Kidney (tissue), 22 donors: ENCODE measurements at regions of chr15 and their contacts with region 1.

Region 1: DNA sequence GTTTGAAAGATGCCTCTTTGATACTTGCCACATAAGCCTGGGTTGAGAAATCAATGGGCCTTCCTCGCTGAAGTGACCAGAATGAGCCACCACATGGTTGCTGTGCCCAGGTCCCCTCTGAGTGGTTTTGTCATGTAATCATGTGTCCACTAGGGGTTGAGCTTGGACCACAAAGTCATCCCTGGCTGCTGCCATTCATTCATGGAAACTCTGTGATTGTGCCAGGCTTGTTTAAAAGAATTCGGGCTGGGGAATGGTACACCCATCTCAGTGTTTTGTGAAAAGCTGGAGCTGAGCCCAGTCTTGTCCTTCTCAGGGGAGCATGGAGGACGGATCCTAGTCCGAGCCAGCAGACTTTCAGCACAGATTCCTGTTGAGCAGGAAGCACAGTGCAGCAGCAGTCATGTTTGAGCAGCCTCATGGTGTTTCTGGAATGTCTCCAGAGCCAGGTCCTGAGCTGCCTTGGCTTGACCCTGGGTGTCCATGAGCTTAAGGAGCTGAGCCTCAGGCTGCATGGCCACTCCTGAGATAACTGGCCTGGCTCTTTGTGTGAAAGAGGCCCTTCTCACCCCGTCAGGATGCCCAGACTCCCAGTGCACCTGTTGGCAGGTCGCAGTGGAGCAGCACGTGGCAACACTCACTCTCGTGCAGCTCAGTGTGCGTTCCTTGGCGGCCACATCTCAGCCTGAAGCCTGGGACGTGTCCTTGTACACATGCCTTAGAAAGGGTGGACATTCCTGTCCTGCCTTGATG is 260.3 kb upstream of the TPM1 start:
- DNase-seq: peak; percentile 71 to 90 (median 86)
- H3K4me3 ChIP-seq: no peak overlapping the region
- H3K27ac ChIP-seq: peak overlapping the region; percentile 19 to 61
- H3K4me1 ChIP-seq: peaks cover 3 to 35% (median 27%) of the 10 kb centered on the region in 3 donors
- H3K27me3 ChIP-seq: no peaks in the 10 kb centered on the region
- CTCF ChIP-seq: peak; percentile 68

Region 2: DNA sequence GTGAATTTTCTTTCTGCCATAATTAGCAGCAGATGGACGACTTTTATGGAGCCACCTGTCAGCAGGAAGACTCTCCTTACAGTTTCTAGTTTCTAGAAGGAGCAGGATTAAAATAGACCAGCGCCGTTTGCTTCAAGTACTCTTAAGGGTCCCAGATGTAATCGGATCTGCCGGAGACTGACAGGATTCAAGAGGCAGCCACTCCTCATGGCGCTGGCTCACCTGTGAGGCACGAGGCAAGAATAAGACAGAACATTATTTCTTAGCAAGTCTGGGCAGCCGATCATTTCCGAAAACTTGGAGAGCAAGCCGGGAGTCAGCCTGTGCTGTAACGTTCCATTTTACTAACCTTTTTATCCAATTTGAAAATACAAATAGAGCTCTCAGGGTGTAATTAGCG is 1142.7 kb before region 1 on chr15:
- intact Hi-C with region 1: no loop called
- DNase-seq: peak in 2 of 5 donors; percentile 16 to 30
- H3K4me3 ChIP-seq: no peak overlapping the region
- H3K27ac ChIP-seq: no peak overlapping the region
- H3K4me1 ChIP-seq: no peaks in the 10 kb centered on the region
- H3K27me3 ChIP-seq: no peaks in the 10 kb centered on the region
- CTCF ChIP-seq: no peak

Region 3: DNA sequence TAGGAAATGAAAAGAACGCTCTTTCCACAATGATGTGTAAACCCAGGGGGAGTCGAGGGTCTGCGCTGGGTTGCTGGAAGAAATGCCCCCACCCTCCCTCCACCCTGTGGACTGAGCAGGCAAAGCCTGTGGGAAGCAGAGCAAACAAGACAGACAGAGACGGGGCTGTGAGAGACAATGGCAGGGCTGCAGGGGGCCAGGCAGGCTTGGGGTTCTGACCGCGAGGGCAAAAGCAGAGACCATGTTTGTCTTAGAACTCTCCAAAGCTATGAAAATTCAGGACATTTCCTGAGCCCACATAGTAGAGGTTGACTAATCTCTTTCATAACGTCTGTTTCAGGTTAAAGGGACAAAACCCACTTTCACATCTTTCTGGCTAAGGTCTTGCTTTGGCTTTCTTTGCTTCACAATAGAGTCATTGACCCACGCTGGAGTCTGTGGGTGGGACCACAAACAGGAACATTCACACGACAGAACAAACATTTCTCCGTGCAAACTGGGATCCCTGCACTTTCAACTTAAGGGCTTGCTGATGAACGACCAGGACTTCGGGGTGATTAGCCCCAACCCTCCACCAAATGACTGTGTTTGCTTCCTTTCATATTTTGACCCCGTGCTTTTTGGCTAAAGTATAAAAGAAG is 104.3 kb after region 1 on chr15:
- intact Hi-C with region 1: no loop called
- DNase-seq: no peak
- H3K4me3 ChIP-seq: no peak overlapping the region
- H3K27ac ChIP-seq: no peak overlapping the region
- H3K4me1 ChIP-seq: peaks cover 0 to 4% (median 2%) of the 10 kb centered on the region in 3 donors
- H3K27me3 ChIP-seq: no peaks in the 10 kb centered on the region
- CTCF ChIP-seq: no peak

Region 4: GRCh38 chr15:63093486-63094205 is 311.4 kb after region 1 on chr15:
- intact Hi-C with region 1: loop called (anchors 10 kb)
- DNase-seq: peak; percentile 84 to 90 (median 89)
- H3K4me3 ChIP-seq: no peak overlapping the region
- H3K27ac ChIP-seq: no peak overlapping the region
- H3K4me1 ChIP-seq: peaks cover 0 to 10% (median 7%) of the 10 kb centered on the region in 3 donors
- H3K27me3 ChIP-seq: no peaks in the 10 kb centered on the region
- CTCF ChIP-seq: peak; percentile 93